Gastrocnemius medialis (tissue), 4 donors: ENCODE measurements at regions of chr3 and their contacts with region 1.

Region 1: GRCh38 chr3:179347345-179348194 is at the start of gene MFN1:
- DNase-seq: peak; percentile 91 to 95
- ATAC-seq: peak; percentile 99 to 100
- H3K4me3 ChIP-seq: peak within 1 kb of the TSS; percentile 90 to 93 (median 91)
- H3K27ac ChIP-seq: peak within 1 kb of the TSS; percentile 84 to 90 (median 89)
- H3K4me1 ChIP-seq: peaks cover 6 to 7% of the 10 kb centered on the region in 2 donors
- H3K27me3 ChIP-seq: no peaks in the 10 kb centered on the region
- CTCF ChIP-seq: no peak
- POLR2A ChIP-seq: peak; percentile 60 to 86
- total RNA-seq, gene MFN1: 27.2 to 37.1 (median 32.9) TPM

Region 2: DNA sequence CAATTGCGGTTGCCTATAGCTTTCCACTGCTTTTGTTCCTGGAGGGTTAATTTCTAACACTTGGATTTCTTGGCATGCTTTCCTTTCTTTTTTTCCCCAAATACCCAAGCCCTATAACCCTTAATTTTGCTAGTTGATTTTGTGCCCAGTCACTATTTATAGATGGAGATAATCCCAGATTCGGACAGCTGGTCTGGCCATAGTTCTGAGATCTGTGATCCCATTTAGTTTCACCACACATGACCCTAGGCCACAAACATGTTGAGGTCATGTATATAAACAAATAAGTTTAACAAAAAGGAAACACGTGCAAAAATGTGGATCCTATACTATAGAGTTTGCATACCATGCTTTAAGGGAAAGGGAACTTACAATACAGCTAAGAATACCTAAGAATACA is 387.4 kb before region 1 on chr3:
- in situ Hi-C with region 1: no loop called
- intact Hi-C with region 1: no loop called
- DNase-seq: no peak
- ATAC-seq: no peak
- H3K4me3 ChIP-seq: no peak overlapping the region
- H3K27ac ChIP-seq: no peak overlapping the region
- H3K4me1 ChIP-seq: no peaks in the 10 kb centered on the region
- H3K27me3 ChIP-seq: no peaks in the 10 kb centered on the region
- CTCF ChIP-seq: no peak
- POLR2A ChIP-seq: no peak

Region 3: DNA sequence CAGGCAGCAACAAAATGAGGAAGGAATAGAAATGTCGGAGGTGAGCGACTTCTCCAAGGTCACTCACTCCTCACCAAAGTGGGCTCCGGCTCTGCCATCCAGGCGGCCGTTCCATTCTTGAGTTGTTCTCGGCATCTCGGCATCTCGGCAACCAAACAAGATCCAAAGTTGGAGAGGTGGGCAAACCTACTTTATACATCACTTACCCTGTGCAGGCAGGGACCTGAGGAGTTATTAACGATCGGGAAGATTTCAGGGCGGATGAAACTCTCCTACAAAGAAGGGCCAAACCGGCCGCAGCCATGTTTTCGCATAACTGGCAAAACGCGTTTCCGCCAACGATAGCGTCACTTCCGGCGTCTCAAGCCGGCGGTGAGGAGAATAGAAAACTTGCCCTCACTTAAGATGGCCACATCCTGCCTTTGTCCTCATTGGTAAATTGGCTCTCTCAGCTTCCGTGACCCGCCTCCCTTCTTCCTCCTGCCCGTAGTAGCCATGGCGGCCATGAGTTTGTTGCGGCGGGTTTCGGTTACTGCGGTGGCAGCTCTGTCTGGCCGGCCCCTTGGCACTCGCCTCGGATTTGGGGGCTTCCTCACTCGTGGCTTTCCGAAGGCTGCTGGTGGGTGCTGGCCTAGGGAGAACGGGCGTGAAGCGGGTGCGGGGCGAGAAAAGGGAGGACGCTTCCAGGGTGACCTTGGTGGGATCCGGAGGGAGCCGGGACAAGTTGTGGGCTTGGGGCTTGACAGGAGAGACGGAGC is 256.9 kb after region 1 on chr3 and contains the starts of genes MRPL47 and NDUFB5:
- in situ Hi-C with region 1: no loop called
- intact Hi-C with region 1: loop called (anchors 1 kb)
- DNase-seq: peak; percentile 93 to 94
- ATAC-seq: peak; percentile 100
- H3K4me3 ChIP-seq: peak within 1 kb of the TSS; percentile 84 to 94 (median 88)
- H3K27ac ChIP-seq: peak within 1 kb of the TSS; percentile 90 to 97 (median 92)
- H3K4me1 ChIP-seq: peaks cover 30 to 40% of the 10 kb centered on the region in 2 donors
- H3K27me3 ChIP-seq: no peaks in the 10 kb centered on the region
- CTCF ChIP-seq: no peak
- POLR2A ChIP-seq: peak; percentile 80 to 88
- total RNA-seq, gene MRPL47: 34.9 to 74.0 (median 41.2) TPM
- total RNA-seq, gene NDUFB5: 127 to 348 (median 179) TPM